ENCODE measurements at regions of chr11 and their contacts with region 1.

Region 1: GRCh38 chr11:76207642-76208401 is 1.5 kb upstream of the WNT11 start:
- DNase-seq: peak; percentile 88

Region 2: DNA sequence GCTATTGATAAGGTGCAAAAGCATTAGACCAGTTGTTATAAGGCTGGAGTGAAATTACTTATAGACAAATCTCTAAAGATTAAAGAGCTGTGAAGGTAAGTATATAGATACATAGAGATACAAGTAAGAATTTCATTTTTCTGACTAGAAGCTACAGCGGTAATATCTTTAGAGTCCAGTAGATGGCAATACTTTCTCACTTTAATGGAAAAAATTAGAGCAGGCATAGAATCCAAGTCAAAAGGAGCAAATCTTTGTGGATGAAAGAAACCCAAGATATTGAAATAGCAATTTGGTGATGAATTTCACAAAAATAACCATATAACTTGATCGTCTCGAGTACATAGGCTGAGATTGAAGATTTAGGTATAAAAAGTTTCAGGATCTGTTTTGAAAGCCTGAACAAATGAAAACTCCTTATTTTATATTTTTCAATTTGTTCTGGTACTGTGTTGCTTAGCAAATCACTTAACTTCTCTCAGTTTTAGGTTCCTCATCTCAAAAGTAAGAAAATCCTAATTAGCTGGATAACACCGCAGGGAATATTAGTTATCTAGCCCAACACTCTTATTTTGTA is 310.9 kb before region 1 on chr11:
- intact Hi-C with region 1: loop called (anchors 2 kb)
- DNase-seq: no peak

Region 3: GRCh38 chr11:76225122-76225611 is 17.3 kb after region 1 on chr11:
- intact Hi-C with region 1: no loop called
- DNase-seq: no peak

Region 4: DNA sequence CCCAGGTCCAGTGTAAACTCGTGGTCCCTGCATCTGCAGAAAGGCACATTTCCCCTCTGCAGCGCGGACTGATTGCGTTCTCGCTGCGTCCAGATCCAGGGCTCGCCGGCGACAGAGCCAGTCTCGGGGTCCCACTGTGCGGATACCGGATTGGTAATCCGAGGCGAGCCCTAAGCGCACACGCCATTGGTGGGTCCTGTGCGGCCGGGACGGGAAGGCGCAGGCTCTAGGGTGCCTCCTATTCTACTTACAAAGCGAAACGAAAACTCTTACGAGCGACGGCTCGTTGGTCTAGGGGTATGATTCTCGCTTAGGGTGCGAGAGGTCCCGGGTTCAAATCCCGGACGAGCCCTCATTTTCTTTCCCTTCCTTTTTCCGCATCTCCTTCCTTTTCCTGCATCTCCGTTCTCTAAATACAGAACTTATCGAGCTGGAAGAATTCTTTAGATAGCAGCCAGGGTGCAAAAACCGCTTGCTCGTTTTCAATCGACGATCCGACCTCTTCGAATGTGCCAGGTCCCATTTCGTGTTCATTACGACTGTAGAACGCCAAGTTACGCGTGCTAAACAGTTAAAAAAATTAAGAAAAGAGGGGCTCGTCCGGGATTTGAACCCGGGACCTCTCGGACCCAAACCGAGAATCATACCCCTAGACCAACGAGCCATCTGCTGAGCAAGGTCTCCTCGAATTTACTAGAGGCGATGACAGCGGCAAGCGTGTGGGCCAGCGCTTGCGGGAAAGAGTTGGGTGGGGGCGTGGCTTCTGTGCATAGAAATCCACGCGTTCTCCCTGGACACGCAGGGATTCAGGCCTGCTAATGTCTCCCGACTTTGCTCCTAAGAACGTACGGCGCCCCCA is 27.6 kb after region 1 on chr11:
- intact Hi-C with region 1: loop called (anchors 2 kb)
- DNase-seq: peak; percentile 91

Region 5: DNA sequence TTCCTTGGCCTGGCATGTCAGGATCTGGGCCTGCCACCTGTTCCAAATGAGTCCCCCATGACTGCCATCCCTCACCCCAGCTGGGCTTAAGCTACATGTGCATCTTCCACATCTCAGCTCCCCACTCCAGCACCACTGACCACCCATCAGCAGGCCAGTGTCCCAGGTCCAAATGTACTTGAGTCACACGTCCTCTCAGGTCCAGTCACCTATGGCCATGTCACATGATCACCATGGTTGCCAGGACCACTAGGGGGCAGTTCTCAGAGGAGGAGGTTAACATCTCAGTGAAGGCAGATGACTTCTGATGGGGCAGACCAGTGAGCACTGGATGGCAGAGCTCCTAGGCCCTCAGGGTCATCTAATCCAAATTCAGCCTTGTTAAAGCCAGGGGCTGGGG is 40.4 kb after region 1 on chr11:
- intact Hi-C with region 1: no loop called
- DNase-seq: no peak

Region 6: DNA sequence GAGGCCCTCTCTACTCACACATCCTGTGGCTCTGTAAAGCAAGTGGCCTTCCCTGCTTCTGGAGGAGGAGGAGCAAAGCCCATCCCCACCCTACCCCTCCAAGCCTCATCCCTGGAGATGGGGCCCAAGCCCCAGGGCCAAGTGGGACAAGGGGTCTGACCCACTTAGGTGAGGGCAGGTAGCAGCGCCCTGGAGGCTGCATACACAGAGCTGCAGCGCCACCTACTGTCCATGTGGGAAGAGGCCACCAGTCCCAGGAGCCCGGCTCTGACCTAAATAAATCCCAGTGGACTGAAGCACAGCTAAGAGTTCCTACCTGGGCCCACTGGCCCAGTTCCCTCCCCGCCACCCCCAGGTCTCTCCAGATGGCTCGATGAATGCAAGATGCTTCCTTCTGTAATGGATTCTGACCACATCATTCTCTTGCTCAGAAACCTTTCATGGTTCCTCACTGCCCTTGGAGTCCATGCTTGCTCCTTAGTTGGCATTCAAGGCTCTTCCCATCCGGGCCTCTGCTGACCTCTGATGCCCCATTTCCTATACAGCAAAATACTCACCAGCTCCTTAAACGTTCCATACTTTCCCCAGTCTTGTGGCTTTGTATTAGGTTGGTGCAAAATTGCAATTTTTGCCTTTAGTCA is 111.0 kb after region 1 on chr11:
- intact Hi-C with region 1: loop called (anchors 1 kb)
- DNase-seq: peak; percentile 90

Region 7: GRCh38 chr11:76380967-76381719 is 173.3 kb after region 1 on chr11 and contains the starts of genes GVQW3 and THAP12:
- intact Hi-C with region 1: loop called (anchors 2 kb)
- DNase-seq: peak; percentile 99
- total RNA-seq, gene GVQW3: 0.97 TPM
- total RNA-seq, gene THAP12: 25.8 TPM

Region 8: GRCh38 chr11:76444384-76445123 is 236.7 kb after region 1 on chr11 and contains the start of gene EMSY:
- intact Hi-C with region 1: loop called (anchors 5 kb)
- DNase-seq: peak; percentile 99
- total RNA-seq, gene EMSY: 17.0 TPM

Region 9: DNA sequence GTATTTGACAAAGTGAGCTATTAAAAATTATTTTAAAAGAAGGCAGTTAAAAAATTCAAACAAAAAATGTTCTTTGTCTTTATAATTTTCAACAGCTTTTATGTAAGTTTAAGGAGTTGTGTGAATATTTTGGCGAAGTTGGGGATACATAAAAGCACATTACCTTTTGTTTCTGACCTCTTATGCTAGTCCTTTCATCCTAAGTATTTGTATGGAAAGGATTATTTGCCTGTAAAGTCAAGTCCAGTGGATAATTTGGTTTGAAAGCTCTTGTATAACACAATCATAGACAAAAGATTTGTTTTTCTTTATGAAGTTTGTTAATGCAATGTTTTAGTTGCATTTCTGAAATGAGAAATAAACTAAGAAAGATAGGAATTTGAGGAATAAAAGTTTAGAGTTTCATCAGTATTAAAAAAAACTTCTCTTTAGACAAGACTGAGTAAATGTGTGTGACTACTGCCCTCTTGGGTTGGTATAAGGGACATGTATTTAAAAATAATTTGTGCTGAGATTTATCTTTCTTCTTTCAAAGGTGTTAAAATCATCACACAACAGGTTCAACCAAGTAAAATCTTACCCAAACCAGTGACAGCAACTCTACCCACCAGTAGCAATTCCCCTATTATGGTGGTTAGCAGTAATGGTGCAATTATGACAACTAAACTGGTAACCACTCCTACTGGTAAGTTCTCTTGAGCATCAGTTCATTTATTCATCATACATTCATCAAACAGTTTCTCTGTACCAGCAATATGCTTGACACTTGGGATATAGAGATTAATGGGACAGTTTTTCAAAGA is 305.2 kb after region 1 on chr11:
- intact Hi-C with region 1: loop called (anchors 5 kb)
- DNase-seq: no peak